ENCODE measurements at regions of chr3 and their contacts with region 1.

Region 1: GRCh38 chr3:152241142-152242017 is 27.3 kb upstream of the MBNL1 start:
- DNase-seq: no peak
- ATAC-seq: peak; percentile 69
- H3K4me3 ChIP-seq: no peak overlapping the region
- H3K27ac ChIP-seq: peak overlapping the region; percentile 91
- H3K4me1 ChIP-seq: peaks cover 27% of the 10 kb centered on the region
- H3K27me3 ChIP-seq: no peaks in the 10 kb centered on the region
- CTCF ChIP-seq: no peak
- EP300 ChIP-seq: no peak
- POLR2A ChIP-seq: no peak
- RAD21 ChIP-seq: no peak

Region 2: GRCh38 chr3:152199102-152199840 is 42.1 kb before region 1 on chr3:
- CTCF ChIA-PET with region 1: interaction called, 14 read pairs
- POLR2A ChIA-PET with region 1: interaction called, 22 read pairs
- RAD21 ChIA-PET with region 1: interaction called, 69 read pairs
- SMC1A ChIA-PET with region 1: interaction called, 74 read pairs
- in situ Hi-C with region 1: no loop called
- intact Hi-C with region 1: loop called (anchors 2 kb)
- DNase-seq: no peak
- ATAC-seq: peak; percentile 14
- H3K4me3 ChIP-seq: peak overlapping the region; percentile 26
- H3K27ac ChIP-seq: peak overlapping the region; percentile 85
- H3K4me1 ChIP-seq: peaks cover 31% of the 10 kb centered on the region
- H3K27me3 ChIP-seq: no peaks in the 10 kb centered on the region
- CTCF ChIP-seq: peak in 1 of 3 experiments; percentile 4; a peak in 1 of 6 replicates
- EP300 ChIP-seq: peak in 1 of 2 experiments; percentile 32; a peak in 1 of 4 replicates
- POLR2A ChIP-seq: no peak
- RAD21 ChIP-seq: no peak

Region 3: GRCh38 chr3:152213203-152213602 is 28.2 kb before region 1 on chr3:
- CTCF ChIA-PET with region 1: interaction called, 4 read pairs
- POLR2A ChIA-PET with region 1: interaction called, 3 read pairs
- RAD21 ChIA-PET with region 1: interaction called, 5 read pairs
- SMC1A ChIA-PET with region 1: interaction called, 14 read pairs
- in situ Hi-C with region 1: no loop called
- intact Hi-C with region 1: no loop called
- DNase-seq: no peak
- ATAC-seq: no peak
- H3K4me3 ChIP-seq: no peak overlapping the region
- H3K27ac ChIP-seq: no peak overlapping the region
- H3K4me1 ChIP-seq: no peaks in the 10 kb centered on the region
- H3K27me3 ChIP-seq: no peaks in the 10 kb centered on the region
- CTCF ChIP-seq: no peak
- EP300 ChIP-seq: no peak
- POLR2A ChIP-seq: no peak
- RAD21 ChIP-seq: no peak

Region 4: DNA sequence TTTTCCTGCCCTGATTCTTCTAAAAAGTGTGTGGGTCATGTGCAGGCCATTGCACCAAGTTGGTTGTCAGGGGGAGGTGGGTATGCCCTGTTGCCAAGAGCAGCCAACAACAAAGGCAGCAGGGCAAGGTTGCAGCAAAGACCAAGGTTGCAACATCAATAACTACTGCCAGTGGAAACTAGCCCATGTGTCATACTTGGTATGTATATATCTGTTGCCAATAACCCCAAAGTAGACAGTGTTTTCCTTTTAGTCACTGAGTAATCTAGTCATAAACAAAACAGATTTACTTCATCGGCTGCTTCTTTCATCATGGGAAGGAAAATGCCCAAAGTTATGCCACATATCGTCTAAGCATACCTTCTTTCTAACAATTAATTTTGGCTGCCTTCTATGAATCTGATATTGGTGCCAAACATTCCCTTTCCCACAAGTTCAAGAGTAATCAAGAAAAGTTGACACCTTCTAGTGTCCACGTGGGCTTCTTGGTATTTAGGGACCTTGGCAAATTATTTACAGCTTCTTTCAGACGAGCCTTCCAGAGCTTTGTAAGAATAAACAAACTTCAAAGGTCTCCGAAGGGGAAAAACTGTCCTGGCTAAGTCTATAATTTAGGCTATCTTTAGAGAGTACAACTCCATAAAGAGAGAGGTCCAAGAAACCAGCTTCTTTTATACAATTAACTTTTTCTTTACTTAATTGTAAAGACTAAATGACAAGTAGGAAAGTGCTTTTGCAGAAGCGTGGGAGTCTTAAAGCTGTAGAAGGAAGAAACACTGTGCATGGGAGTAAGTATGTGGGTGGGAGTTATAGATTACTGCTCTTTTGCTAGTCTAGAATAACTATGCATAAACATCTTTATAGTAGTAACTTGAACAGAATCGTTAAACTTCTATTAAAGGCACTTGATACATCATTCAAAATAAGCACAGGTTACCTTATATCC is 17.3 kb after region 1 on chr3:
- CTCF ChIA-PET with region 1: interaction called, 47 read pairs
- POLR2A ChIA-PET with region 1: interaction called, 31 read pairs
- RAD21 ChIA-PET with region 1: interaction called, 108 read pairs
- SMC1A ChIA-PET with region 1: interaction called, 160 read pairs
- in situ Hi-C with region 1: no loop called
- intact Hi-C with region 1: no loop called
- DNase-seq: no peak
- ATAC-seq: peak; percentile 75
- H3K4me3 ChIP-seq: no peak overlapping the region; the same call in 1 of the 2 replicates
- H3K27ac ChIP-seq: peak overlapping the region; percentile 11; the same call in 1 of the 2 replicates
- H3K4me1 ChIP-seq: peaks cover 27% of the 10 kb centered on the region
- H3K27me3 ChIP-seq: no peaks in the 10 kb centered on the region
- CTCF ChIP-seq: no peak
- EP300 ChIP-seq: no peak
- POLR2A ChIP-seq: no peak
- RAD21 ChIP-seq: no peak

Region 5: DNA sequence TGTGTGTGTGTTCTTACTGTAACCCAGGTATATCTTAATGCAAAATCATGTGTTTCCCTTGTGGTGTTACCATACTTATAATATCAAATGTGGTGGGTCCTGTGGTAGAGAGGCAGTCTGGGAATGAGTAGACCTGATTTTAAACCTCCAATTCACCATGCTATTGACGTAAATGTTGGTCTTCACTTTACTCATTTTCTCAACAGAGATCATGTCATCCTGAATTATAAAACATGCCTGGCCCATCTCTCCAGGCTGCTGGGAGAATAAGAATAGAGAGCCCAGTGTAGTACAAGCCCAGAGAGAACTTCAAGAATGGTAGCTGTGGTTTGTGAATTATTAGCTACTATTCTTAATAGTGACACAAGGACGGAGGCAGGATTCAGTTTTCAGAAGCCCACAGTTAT is 115.5 kb after region 1 on chr3:
- CTCF ChIA-PET with region 1: no interaction called
- POLR2A ChIA-PET with region 1: no interaction called
- RAD21 ChIA-PET with region 1: no interaction called
- SMC1A ChIA-PET with region 1: no interaction called
- in situ Hi-C with region 1: no loop called
- intact Hi-C with region 1: no loop called
- DNase-seq: peak; percentile 61
- ATAC-seq: peak; percentile 89
- H3K4me3 ChIP-seq: no peak overlapping the region
- H3K27ac ChIP-seq: peak overlapping the region; percentile 48
- H3K4me1 ChIP-seq: peaks cover 14% of the 10 kb centered on the region
- H3K27me3 ChIP-seq: no peaks in the 10 kb centered on the region
- CTCF ChIP-seq: no peak
- EP300 ChIP-seq: peak; percentile 90
- POLR2A ChIP-seq: no peak
- RAD21 ChIP-seq: no peak